T-cell (primary cell): ENCODE measurements at regions of chr1 and their contacts with region 1.

Region 1: DNA sequence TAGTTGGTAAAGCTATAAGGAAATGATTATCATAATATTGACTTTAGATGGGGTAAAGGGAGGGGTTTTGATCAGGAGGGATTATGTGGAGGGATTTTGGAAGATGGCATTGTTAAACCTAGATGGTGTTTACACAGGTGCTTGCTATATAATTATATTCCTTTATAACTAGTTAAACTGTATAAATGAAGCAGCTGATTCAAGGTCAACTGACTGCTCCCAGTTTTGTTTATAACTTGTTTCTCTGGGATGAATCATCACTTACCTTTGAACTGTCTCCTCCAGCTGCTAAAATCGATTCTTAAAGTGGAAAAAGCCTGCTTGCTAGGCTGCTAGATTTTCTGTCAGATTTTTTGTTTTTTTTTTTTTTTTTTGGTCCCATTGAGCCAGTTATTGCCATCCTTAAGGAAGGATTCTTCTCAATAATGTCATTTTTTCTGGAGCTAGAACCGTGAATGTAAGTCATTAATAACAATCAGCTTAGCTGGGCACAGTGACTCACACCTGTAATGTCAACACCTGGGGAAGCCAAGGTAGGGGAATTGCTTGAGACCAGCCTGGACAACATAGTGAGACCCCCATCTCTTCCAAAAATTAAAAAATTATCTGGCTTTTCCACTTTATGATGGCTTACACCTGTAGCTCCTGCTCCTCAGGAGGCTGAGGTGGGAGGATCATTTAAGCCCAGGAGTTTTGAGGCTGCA is 153.2 kb downstream of the PIK3R3 start:
- DNase-seq: no peak
- ATAC-seq: no peak
- H3K4me3 ChIP-seq: no peak overlapping the region
- H3K4me3 Mint-ChIP-seq: no peak overlapping the region
- H3K27ac ChIP-seq: no peak overlapping the region
- H3K27ac Mint-ChIP-seq: no peak overlapping the region
- H3K4me1 ChIP-seq: no peaks in the 10 kb centered on the region
- H3K4me1 Mint-ChIP-seq: no peaks in the 10 kb centered on the region
- H3K27me3 ChIP-seq: no peaks in the 10 kb centered on the region
- H3K27me3 Mint-ChIP-seq: no peaks in the 10 kb centered on the region

Region 2: DNA sequence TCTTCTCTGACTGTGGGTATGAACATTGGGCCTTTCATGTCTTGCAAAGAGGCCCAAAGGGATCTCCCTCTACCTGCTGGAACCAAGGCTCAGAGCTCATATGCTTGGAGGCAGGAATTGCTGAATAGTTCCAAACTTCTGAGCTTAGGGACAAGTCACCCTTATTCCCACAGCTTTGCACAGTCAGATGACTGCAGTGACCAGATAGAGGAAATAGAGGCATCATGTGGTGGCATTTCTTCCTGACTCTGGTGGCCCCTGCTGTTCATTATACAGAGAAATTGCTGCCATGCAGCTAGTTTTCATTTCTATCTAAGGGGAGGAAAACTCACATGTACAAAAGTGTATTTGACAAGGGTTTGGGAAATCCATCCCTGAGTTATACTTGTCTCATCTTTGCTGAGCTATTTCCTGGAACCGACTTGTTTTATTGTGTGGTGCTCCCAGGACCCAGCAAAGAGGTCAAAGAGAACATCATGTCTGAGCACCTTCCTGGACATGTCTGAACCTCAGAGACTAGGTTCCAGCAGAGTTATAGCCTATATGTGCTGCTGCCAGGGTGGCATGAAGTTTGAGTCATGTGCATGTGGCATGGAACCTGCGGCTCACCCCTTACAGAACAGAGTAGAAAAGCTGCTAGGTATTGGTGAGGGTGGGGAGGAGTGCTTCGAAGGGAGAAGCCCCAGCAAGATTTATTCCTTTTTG is 22.0 kb after region 1 on chr1:
- CTCF ChIA-PET with region 1: interaction called in 1 of 2 experiments, 10 read pairs
- POLR2A ChIA-PET with region 1: no interaction called
- DNase-seq: no peak
- ATAC-seq: no peak
- H3K4me3 ChIP-seq: no peak overlapping the region
- H3K4me3 Mint-ChIP-seq: no peak overlapping the region
- H3K27ac ChIP-seq: no peak overlapping the region
- H3K27ac Mint-ChIP-seq: no peak overlapping the region
- H3K4me1 ChIP-seq: no peaks in the 10 kb centered on the region
- H3K4me1 Mint-ChIP-seq: no peaks in the 10 kb centered on the region
- H3K27me3 ChIP-seq: no peaks in the 10 kb centered on the region
- H3K27me3 Mint-ChIP-seq: no peaks in the 10 kb centered on the region